Activated CD4-positive, alpha-beta T cell treated with anti-CD3 and anti-CD28 coated beads, Interleukin-2, amount 10 ng/mL, durations not matched to agents 7 days and 5 days (primary cell): ENCODE measurements at regions of chr6 and their contacts with region 1.

Region 1: DNA sequence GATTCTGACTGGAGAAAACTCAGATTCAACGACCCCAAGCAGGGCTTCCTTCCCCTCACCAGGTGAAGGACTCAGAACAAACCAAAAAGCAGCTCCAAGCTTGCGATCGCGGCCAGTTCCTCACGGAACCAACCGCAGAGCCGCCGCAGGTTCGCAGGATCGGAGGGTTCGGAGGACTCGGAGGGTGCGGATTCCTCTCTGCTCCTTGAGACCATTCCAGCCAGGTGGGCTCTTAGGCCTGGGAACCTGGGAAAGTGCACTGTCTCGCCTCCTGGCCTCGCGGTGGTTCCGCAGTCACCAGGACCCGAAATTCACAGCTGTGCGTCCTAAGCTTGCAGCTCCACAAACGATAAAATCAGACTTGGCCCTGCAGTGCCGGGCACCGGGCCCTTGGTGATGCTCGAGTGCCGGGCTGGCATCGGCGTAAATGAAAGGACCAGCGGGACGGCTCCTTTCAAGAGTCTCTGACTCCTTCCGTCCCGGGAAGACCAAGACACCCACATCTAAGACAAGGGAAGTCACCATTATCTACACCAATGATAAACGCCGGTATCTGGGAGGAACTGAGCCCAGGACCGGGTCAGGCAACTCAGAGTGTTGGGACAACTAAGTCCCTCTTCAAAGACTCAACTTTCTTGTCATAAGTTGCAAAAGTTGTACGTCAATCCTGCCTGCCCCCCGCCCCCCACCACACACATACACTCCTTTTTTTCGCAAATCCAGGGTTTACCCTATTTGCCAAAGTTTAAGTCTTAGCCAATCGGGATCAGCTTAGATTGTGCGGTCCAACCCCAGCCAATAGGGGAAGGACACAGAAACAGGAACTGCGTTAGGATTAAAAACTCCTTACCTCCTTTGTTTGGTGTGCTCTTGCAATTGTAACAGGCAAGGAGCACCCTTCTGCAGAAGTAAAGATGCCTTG is 69.8 kb upstream of the PRSS16 start:
- DNase-seq: peak; percentile 79
- H3K4me3 Mint-ChIP-seq: peak overlapping the region; percentile 96
- H3K27ac Mint-ChIP-seq: peak overlapping the region; percentile 93
- H3K4me1 Mint-ChIP-seq: peaks cover 17% of the 10 kb centered on the region
- H3K27me3 Mint-ChIP-seq: peaks cover 40% of the 10 kb centered on the region

Region 2: GRCh38 chr6:27126815-27127537 is 50.8 kb before region 1 on chr6:
- CTCF ChIA-PET with region 1: interaction called, 14 read pairs
- POLR2A ChIA-PET with region 1: no interaction called
- DNase-seq: peak; percentile 91
- H3K4me3 Mint-ChIP-seq: peak overlapping the region; percentile 72
- H3K27ac Mint-ChIP-seq: peak overlapping the region; percentile 93
- H3K4me1 Mint-ChIP-seq: peaks cover 58% of the 10 kb centered on the region
- H3K27me3 Mint-ChIP-seq: no peaks in the 10 kb centered on the region

Region 3: GRCh38 chr6:27156874-27157458 is 20.8 kb before region 1 on chr6:
- CTCF ChIA-PET with region 1: interaction called, 14 read pairs
- POLR2A ChIA-PET with region 1: no interaction called
- DNase-seq: no peak
- H3K4me3 Mint-ChIP-seq: peak overlapping the region; percentile 68
- H3K27ac Mint-ChIP-seq: peak overlapping the region; percentile 90
- H3K4me1 Mint-ChIP-seq: peaks cover 56% of the 10 kb centered on the region
- H3K27me3 Mint-ChIP-seq: no peaks in the 10 kb centered on the region